Activated naive CD4-positive, alpha-beta T cell treated with anti-CD3 and anti-CD28 coated beads, Interleukin-2, amount 10 ng/mL, durations not matched to agents 7 days and 5 days (primary cell): ENCODE measurements at regions of chr11 and their contacts with region 1.

Region 1: DNA sequence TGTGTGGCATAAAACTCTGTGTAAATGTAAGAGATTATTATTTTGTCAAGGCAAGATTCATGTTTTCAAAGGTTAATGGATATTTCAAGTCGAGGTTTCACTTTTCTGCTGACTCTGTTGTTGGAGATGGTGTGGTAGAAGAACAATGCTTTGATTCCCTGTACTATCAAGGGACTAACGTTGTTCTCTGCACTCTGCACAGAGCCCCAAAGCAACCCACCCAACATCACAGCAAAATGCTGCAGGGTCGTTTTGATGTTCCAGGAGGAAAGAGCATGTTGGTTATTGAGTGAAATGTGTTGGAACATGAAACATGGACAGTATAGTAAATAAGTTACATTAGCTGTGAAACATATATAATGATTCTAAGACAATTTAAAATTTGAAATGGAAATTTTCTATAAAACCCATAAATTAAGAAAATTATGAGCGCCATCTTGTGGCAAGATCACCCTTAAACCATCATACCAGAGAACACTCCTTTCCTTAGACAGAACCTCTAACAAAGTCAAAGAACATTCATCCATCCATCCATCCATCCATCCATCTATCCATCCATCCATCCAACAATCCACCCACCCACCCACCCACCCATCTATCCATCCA is 164.4 kb upstream of the ZBED5 start:
- DNase-seq: peak; percentile 31
- H3K4me3 Mint-ChIP-seq: no peak overlapping the region
- H3K27ac Mint-ChIP-seq: no peak overlapping the region
- H3K4me1 Mint-ChIP-seq: no peaks in the 10 kb centered on the region
- H3K27me3 Mint-ChIP-seq: no peaks in the 10 kb centered on the region

Region 2: GRCh38 chr11:10933455-10934292 is 88.6 kb before region 1 on chr11:
- CTCF ChIA-PET with region 1: interaction called, 63 read pairs
- DNase-seq: peak; percentile 87
- H3K4me3 Mint-ChIP-seq: peak overlapping the region; percentile 58
- H3K27ac Mint-ChIP-seq: no peak overlapping the region
- H3K4me1 Mint-ChIP-seq: peaks cover 27% of the 10 kb centered on the region
- H3K27me3 Mint-ChIP-seq: peaks cover 77% of the 10 kb centered on the region

Region 3: DNA sequence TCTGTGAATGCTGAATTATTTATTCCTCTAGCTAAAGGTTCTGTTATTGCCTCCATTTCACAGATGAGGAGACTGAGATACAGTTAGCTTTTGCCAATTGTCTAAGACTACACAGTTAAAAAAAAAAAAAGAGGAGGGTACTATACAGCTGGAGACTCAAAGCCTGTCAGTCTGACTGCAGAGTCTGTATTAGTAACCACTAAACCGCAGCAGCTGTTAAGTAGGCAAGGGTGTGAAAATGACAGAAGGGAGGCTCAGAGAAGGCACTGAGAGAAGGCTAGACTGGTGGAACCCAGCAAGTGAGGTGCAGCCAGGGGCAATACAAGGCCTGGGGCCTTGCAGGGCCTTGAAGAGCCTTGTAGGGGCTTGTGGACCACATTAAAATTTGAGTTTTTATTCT is 149.6 kb after region 1 on chr11:
- CTCF ChIA-PET with region 1: no interaction called
- DNase-seq: peak; percentile 44
- H3K4me3 Mint-ChIP-seq: no peak overlapping the region
- H3K27ac Mint-ChIP-seq: no peak overlapping the region
- H3K4me1 Mint-ChIP-seq: peaks cover 10% of the 10 kb centered on the region
- H3K27me3 Mint-ChIP-seq: peaks cover 17% of the 10 kb centered on the region